Activated T-helper 1 cell treated with anti-CD3 and anti-CD28 coated beads, Interleukin-12 subunit alpha, Interleukin-12 subunit beta, Interleukin-2, Interleukin-4 antibody, amounts not matched to agents 30 ng/mL and 10 ng/mL and 1 ng/mL, durations not matched to agents 14 hours and 24 hours and 36 hours (primary cell): ENCODE measurements at regions of chr6 and their contacts with region 1.

Region 1: GRCh38 chr6:157428427-157429202 is 47.6 kb downstream of the ZDHHC14 start:
- DNase-seq: no peak
- H3K4me3 Mint-ChIP-seq: peak overlapping the region; percentile 2
- H3K27ac Mint-ChIP-seq: peak overlapping the region; percentile 77
- H3K4me1 Mint-ChIP-seq: peaks cover 43% of the 10 kb centered on the region
- H3K27me3 Mint-ChIP-seq: peaks cover 3% of the 10 kb centered on the region

Region 2: DNA sequence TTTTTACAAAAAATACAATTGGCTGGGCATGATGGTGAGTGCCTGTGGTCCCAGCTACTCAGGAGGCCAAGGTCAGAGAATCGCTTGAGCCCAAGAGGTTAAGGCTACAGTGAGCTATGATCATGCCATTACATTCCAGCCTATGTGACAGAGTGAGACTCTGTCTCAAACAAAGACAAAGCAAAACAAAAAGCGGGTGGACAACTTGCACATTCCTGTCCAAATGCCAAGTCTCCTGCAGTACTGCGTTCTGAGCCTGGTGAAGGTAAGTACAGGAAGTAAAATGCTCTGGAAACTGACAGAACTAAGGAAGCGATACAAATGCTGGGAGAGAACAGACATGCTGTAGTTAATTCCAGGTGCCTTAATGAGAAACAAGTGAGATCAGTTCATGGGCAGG is 84.9 kb before region 1 on chr6:
- intact Hi-C with region 1: no loop called
- DNase-seq: no peak
- H3K4me3 Mint-ChIP-seq: no peak overlapping the region
- H3K27ac Mint-ChIP-seq: no peak overlapping the region
- H3K4me1 Mint-ChIP-seq: no peaks in the 10 kb centered on the region
- H3K27me3 Mint-ChIP-seq: peaks cover 57% of the 10 kb centered on the region

Region 3: DNA sequence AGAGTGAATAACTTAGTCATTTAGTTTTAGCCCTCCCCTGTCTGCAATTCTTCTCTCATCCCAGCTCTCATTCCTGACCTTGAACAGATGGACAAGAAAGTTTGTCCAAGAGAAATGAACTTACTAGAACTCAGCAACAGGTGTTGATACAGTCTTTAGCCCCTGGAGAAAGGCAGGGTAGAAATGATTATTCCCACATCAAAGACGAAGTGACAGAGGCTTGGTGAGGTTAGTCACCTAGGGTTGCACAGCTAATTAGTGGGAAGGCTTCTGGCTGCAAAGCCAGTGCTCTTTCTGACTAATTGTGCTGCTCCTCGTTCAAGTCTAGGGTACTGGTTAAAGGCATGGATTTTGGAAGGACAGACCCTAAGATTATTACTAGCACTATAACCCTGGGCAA is 43.1 kb before region 1 on chr6:
- intact Hi-C with region 1: loop called (anchors 1 kb)
- DNase-seq: no peak
- H3K4me3 Mint-ChIP-seq: peak overlapping the region; percentile 65
- H3K27ac Mint-ChIP-seq: peak overlapping the region; percentile 40
- H3K4me1 Mint-ChIP-seq: peaks cover 37% of the 10 kb centered on the region
- H3K27me3 Mint-ChIP-seq: no peaks in the 10 kb centered on the region

Region 4: GRCh38 chr6:157443066-157443800 is 14.6 kb after region 1 on chr6:
- intact Hi-C with region 1: loop called (anchors 1 kb)
- DNase-seq: no peak
- H3K4me3 Mint-ChIP-seq: peak overlapping the region; percentile 43
- H3K27ac Mint-ChIP-seq: peak overlapping the region; percentile 85
- H3K4me1 Mint-ChIP-seq: peaks cover 30% of the 10 kb centered on the region
- H3K27me3 Mint-ChIP-seq: peaks cover 3% of the 10 kb centered on the region

Region 5: GRCh38 chr6:157497579-157497978 is 69.0 kb after region 1 on chr6:
- intact Hi-C with region 1: loop called (anchors 2 kb)
- DNase-seq: no peak
- H3K4me3 Mint-ChIP-seq: no peak overlapping the region
- H3K27ac Mint-ChIP-seq: no peak overlapping the region
- H3K4me1 Mint-ChIP-seq: peaks cover 48% of the 10 kb centered on the region
- H3K27me3 Mint-ChIP-seq: peaks cover 7% of the 10 kb centered on the region

Region 6: GRCh38 chr6:157571269-157571668 is 142.7 kb after region 1 on chr6:
- intact Hi-C with region 1: no loop called
- DNase-seq: no peak
- H3K4me3 Mint-ChIP-seq: no peak overlapping the region
- H3K27ac Mint-ChIP-seq: no peak overlapping the region
- H3K4me1 Mint-ChIP-seq: peaks cover 24% of the 10 kb centered on the region
- H3K27me3 Mint-ChIP-seq: peaks cover 5% of the 10 kb centered on the region